GM10248 (cell line): ENCODE measurements at regions of chr5 and their contacts with region 1.

Region 1: GRCh38 chr5:102782311-102782770 is 27.2 kb downstream of the PAM start:
- DNase-seq: no peak
- CTCF ChIP-seq: no peak

Region 2: GRCh38 chr5:102754767-102755431 is 27.4 kb before region 1 on chr5 and contains the start of gene PAM:
- CTCF ChIA-PET with region 1: interaction called, 37 read pairs
- POLR2A ChIA-PET with region 1: no interaction called
- DNase-seq: peak; percentile 92
- CTCF ChIP-seq: no peak

Region 3: GRCh38 chr5:102762095-102762534 is 20.2 kb before region 1 on chr5:
- CTCF ChIA-PET with region 1: interaction called, 37 read pairs
- POLR2A ChIA-PET with region 1: no interaction called
- DNase-seq: peak; percentile 26
- CTCF ChIP-seq: no peak

Region 4: GRCh38 chr5:102771435-102771834 is 10.9 kb before region 1 on chr5:
- CTCF ChIA-PET with region 1: interaction called, 35 read pairs
- POLR2A ChIA-PET with region 1: no interaction called
- DNase-seq: no peak
- CTCF ChIP-seq: no peak

Region 5: DNA sequence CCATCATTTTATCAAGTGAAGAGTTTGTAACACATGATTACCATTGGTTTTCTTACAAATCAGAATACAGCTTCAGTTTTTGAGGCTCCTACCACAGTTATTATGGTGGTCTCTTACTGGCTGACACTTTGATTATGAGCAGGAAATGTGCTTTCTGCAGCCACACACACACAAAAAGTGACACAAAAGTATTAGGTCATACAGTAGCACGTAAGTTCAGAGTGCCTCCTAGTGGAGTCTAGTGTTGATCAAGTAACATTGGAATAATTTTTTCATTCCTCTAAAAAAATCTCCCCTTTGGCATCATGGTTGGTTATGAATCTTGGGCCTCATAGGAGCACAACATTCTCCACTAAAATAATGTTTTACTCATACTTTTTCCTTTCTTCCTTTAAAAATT is 10.4 kb after region 1 on chr5:
- CTCF ChIA-PET with region 1: interaction called, 27 read pairs
- POLR2A ChIA-PET with region 1: no interaction called
- DNase-seq: no peak
- CTCF ChIP-seq: no peak

Region 6: DNA sequence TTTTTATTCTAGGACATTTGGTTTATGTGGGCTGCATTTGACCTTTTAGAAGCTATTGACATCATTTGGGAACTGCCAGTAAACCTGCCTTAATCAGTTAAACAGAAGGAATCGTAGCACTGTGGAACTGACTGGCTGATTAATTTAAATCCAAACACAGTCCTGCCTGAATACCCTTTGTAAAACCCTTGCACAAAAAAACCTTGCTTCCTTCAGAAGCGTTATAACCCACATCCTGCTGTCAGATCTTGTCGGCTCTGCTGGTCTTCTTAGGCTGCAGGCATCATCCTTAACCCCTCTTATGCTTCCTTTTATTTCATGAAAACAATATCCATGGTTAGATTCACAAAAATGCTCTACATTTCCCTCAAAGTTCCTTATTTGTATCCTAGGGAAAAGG is 19.0 kb after region 1 on chr5:
- CTCF ChIA-PET with region 1: interaction called, 27 read pairs
- POLR2A ChIA-PET with region 1: no interaction called
- DNase-seq: no peak
- CTCF ChIP-seq: no peak

Region 7: GRCh38 chr5:102875721-102876123 is 93.4 kb after region 1 on chr5:
- CTCF ChIA-PET with region 1: no interaction called
- POLR2A ChIA-PET with region 1: no interaction called
- DNase-seq: no peak
- CTCF ChIP-seq: no peak